HepG2 (cell line): ENCODE measurements at regions of chr1 and their contacts with region 1.

Region 1: GRCh38 chr1:20633190-20634064 is at the start of gene PINK1:
- DNase-seq: peak; percentile 86
- ATAC-seq: peak; percentile 90
- H3K4me3 ChIP-seq: peak within 1 kb of the TSS; percentile 74 to 90 (median 77)
- H3K27ac ChIP-seq: peak within 1 kb of the TSS; percentile 75
- H3K4me1 ChIP-seq: peaks cover 22% of the 10 kb centered on the region
- H3K27me3 ChIP-seq: no peaks in the 10 kb centered on the region
- CTCF ChIP-seq: peak; percentile 94
- EP300 ChIP-seq: peak; percentile 32 to 55; a peak in 2 of 4 replicates
- POLR2A ChIP-seq: peak in 1 of 2 experiments; percentile 39; a peak in 1 of 4 replicates
- RAD21 ChIP-seq: peak; percentile 92
- total RNA-seq, gene PINK1: 13.1 and 15.3 TPM in 2 replicates

Region 2: GRCh38 chr1:20376880-20377494 is 256.4 kb before region 1 on chr1:
- CTCF ChIA-PET with region 1: no interaction called
- POLR2A ChIA-PET with region 1: no interaction called
- in situ Hi-C with region 1: no loop called
- intact Hi-C with region 1: no loop called
- DNase-seq: peak; percentile 10
- ATAC-seq: peak; percentile 89
- H3K4me3 ChIP-seq: no peak overlapping the region
- H3K27ac ChIP-seq: no peak overlapping the region
- H3K4me1 ChIP-seq: no peaks in the 10 kb centered on the region
- H3K27me3 ChIP-seq: peaks cover 0 to 18% of the 10 kb centered on the region in 2 experiments; a peak in 2 of 5 replicates
- CTCF ChIP-seq: peak; percentile 85
- EP300 ChIP-seq: no peak
- POLR2A ChIP-seq: no peak
- RAD21 ChIP-seq: peak; percentile 37

Region 3: GRCh38 chr1:20530906-20531305 is 102.5 kb before region 1 on chr1:
- CTCF ChIA-PET with region 1: no interaction called
- POLR2A ChIA-PET with region 1: no interaction called
- in situ Hi-C with region 1: loop called (anchors 5 kb)
- intact Hi-C with region 1: no loop called
- DNase-seq: no peak
- ATAC-seq: no peak
- H3K4me3 ChIP-seq: no peak overlapping the region
- H3K27ac ChIP-seq: no peak overlapping the region
- H3K4me1 ChIP-seq: peaks cover 7% of the 10 kb centered on the region
- H3K27me3 ChIP-seq: peaks cover 3 to 41% of the 10 kb centered on the region in 2 experiments; a peak in 4 of 5 replicates
- CTCF ChIP-seq: no peak
- EP300 ChIP-seq: no peak
- POLR2A ChIP-seq: no peak
- RAD21 ChIP-seq: no peak

Region 4: GRCh38 chr1:20574686-20575540 is 58.5 kb before region 1 on chr1:
- CTCF ChIA-PET with region 1: interaction called, 13 read pairs
- POLR2A ChIA-PET with region 1: interaction called, 16 read pairs
- in situ Hi-C with region 1: loop called (anchors 5 kb)
- intact Hi-C with region 1: loop called (anchors 2 kb)
- DNase-seq: peak; percentile 75
- ATAC-seq: peak; percentile 97
- H3K4me3 ChIP-seq: no peak overlapping the region
- H3K27ac ChIP-seq: no peak overlapping the region
- H3K4me1 ChIP-seq: peaks cover 7% of the 10 kb centered on the region; the same call in 1 of the 2 replicates
- H3K27me3 ChIP-seq: no peaks in the 10 kb centered on the region; a peak in 1 of 5 replicates
- CTCF ChIP-seq: peak; percentile 90
- EP300 ChIP-seq: no peak
- POLR2A ChIP-seq: no peak
- RAD21 ChIP-seq: peak; percentile 76

Region 5: GRCh38 chr1:20614130-20614580 is 19.3 kb before region 1 on chr1:
- CTCF ChIA-PET with region 1: no interaction called
- POLR2A ChIA-PET with region 1: interaction called, 23 read pairs
- in situ Hi-C with region 1: no loop called
- intact Hi-C with region 1: no loop called
- DNase-seq: no peak
- ATAC-seq: no peak; the same call in 2 of the 3 replicates
- H3K4me3 ChIP-seq: no peak overlapping the region
- H3K27ac ChIP-seq: peak overlapping the region; percentile 65
- H3K4me1 ChIP-seq: peaks cover 22% of the 10 kb centered on the region
- H3K27me3 ChIP-seq: no peaks in the 10 kb centered on the region
- CTCF ChIP-seq: no peak
- EP300 ChIP-seq: no peak
- POLR2A ChIP-seq: no peak
- RAD21 ChIP-seq: no peak

Region 6: DNA sequence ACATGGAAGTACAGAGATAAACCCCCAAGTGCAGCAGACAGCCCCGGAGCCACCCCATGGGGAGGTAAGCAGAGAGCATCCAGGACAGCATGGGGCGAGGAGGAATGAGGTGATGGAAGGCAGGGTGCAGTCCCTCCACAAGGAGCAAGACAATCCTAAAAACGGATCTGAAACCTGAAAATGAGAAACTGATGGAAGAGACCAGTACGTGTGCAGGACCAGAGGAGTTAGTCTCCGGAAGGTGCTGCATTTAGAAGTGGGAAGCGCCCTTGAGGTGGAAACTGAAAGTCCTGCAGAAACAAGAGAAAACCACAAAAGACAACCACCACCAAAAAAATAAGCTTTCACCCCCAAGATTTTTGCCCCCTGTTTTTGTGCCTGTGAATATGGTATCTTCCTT is 45.2 kb after region 1 on chr1:
- CTCF ChIA-PET with region 1: no interaction called
- POLR2A ChIA-PET with region 1: no interaction called
- in situ Hi-C with region 1: no loop called
- intact Hi-C with region 1: no loop called
- DNase-seq: no peak
- ATAC-seq: no peak
- H3K4me3 ChIP-seq: no peak overlapping the region
- H3K27ac ChIP-seq: no peak overlapping the region
- H3K4me1 ChIP-seq: peaks cover 13% of the 10 kb centered on the region
- H3K27me3 ChIP-seq: peaks cover 0 to 17% of the 10 kb centered on the region in 2 experiments; a peak in 3 of 5 replicates
- CTCF ChIP-seq: no peak
- EP300 ChIP-seq: no peak
- POLR2A ChIP-seq: no peak
- RAD21 ChIP-seq: no peak